Heart right ventricle (tissue), 16 donors: ENCODE measurements at regions of chrX and their contacts with region 1.

Region 1: DNA sequence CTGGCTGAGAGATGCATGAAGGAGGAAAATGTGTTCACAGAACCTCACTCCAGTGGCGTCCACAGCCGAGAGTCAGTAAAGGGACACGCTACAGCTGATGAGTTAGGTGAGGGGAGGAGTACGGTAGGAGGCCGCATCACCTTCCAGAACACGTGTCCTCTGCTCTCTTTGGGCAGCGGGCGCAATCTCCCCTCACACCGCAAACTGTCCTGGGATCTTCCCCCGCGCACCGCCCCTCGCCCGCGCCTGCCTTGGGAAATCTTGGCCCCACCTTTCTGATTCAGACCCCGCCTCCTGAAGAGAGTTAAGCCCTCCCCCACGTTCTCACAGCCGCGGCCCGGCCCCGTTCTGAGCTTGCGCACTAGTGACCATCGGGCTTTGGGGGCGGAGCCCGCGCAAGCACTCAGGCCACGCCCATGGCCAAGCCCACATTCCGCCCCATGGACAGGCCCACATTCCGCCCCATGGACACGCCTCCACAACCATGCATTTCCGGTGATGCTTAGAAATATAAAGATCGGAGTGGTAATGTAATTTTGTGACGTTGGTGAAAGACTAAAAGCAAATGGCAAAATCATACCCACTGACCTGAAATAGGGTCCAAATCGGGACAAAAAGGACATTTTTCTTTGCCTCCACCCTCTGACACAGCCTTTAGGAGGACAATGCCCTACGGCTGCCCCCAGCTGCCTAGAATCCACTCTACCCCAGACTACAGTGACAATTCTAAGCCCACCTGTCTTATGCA is 13.3 kb downstream of the SMIM10 start:
- DNase-seq: peak; percentile 88 to 89
- ATAC-seq: peak; percentile 98 to 100 (median 99)
- H3K4me3 ChIP-seq: peak overlapping the region; percentile 28 to 56 (median 50)
- H3K27ac ChIP-seq: peak overlapping the region in 4 of 10 donors; percentile 29 to 50 (median 44)
- H3K4me1 ChIP-seq: peaks cover 0 to 11% (median 0%) of the 10 kb centered on the region in 9 donors
- H3K27me3 ChIP-seq: peaks cover 0 to 22% (median 0%) of the 10 kb centered on the region in 7 donors
- CTCF ChIP-seq: no peak

Region 2: DNA sequence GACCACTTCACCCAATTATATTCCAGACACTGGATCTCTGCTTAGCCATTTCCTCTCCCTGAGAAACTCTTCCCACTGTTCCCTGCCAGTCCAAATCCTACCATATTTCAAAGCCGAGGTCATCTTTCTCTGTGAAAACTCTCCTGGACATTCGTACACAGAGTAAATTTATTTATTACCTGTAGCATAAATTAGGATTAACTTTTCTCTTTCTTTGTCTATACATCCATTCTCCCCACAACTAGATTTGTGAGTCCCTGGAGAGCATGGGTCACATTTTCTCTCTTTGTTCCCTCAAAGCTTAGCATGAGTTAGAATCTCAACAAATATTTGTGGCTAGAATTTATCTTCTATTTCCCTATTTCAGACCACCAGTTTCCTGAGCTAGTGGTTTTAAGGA is 41.0 kb before region 1 on chrX:
- intact Hi-C with region 1: loop called in 5 of 10 experiments (anchors 2 to 5 kb)
- DNase-seq: no peak
- ATAC-seq: no peak
- H3K4me3 ChIP-seq: no peak overlapping the region
- H3K27ac ChIP-seq: no peak overlapping the region
- H3K4me1 ChIP-seq: no peaks in the 10 kb centered on the region
- H3K27me3 ChIP-seq: peaks cover 0 to 44% (median 0%) of the 10 kb centered on the region in 7 donors
- CTCF ChIP-seq: no peak